ENCODE measurements at regions of chrX and their contacts with region 1.

Region 1: DNA sequence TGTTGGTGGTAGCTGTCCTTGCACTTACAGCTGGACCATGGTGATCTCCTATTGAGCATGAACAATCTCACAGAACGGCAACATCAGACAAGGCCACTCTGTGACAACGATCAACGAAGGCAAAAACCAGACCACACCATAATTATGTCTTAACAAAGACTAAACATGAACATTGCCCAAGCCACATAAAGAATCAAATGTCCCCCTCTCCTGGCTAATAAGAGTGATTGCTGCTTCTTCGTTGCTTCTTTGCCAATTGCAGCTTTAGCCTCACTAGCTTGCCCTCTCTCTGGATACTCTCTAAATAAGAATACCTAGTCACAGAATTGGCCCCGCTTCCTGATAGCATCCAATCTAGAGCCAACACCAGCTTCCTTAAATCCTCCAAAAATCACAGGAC is 41.5 kb upstream of the PGRMC1 start:
- DNase-seq: no peak
- ATAC-seq: no peak
- H3K4me3 ChIP-seq: no peak overlapping the region
- H3K27ac ChIP-seq: no peak overlapping the region
- H3K4me1 ChIP-seq: no peaks in the 10 kb centered on the region
- H3K27me3 ChIP-seq: no peaks in the 10 kb centered on the region
- CTCF ChIP-seq: no peak; a peak in 1 of 6 replicates
- EP300 ChIP-seq: no peak
- POLR2A ChIP-seq: no peak
- RAD21 ChIP-seq: 0 out of 2 replicates have a peak, but pooled peaks have one; percentile 22

Region 2: DNA sequence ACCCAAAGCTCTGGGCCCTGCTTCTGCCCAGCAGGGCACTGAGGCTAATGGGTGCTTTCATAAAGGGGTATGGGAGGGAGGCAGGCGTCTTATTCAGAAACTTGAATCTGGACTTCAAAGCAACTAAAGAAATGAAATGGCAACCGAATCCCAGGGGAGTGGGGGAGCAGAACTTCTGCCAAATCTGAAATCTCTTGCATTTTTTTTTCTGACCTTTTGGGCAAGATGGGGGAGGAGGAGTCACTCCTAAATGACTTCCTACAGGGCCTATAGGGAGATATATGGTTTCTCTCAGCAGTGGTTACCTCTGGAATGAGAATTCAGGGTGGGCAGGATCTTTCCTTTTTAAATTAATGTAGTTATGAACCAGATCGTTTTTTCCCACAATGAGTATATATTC is 36.4 kb before region 1 on chrX:
- CTCF ChIA-PET with region 1: no interaction called
- POLR2A ChIA-PET with region 1: no interaction called
- RAD21 ChIA-PET with region 1: no interaction called
- SMC1A ChIA-PET with region 1: no interaction called
- in situ Hi-C with region 1: no loop called
- intact Hi-C with region 1: loop called (anchors 1 kb)
- DNase-seq: no peak
- ATAC-seq: no peak
- H3K4me3 ChIP-seq: no peak overlapping the region
- H3K27ac ChIP-seq: no peak overlapping the region
- H3K4me1 ChIP-seq: no peaks in the 10 kb centered on the region
- H3K27me3 ChIP-seq: no peaks in the 10 kb centered on the region
- CTCF ChIP-seq: no peak
- EP300 ChIP-seq: no peak
- POLR2A ChIP-seq: no peak
- RAD21 ChIP-seq: no peak